CD8-positive, alpha-beta memory T cell (primary cell): ENCODE measurements at regions of chr10 and their contacts with region 1.

Region 1: GRCh38 chr10:6445501-6446316 is 134.4 kb downstream of the PRKCQ start:
- DNase-seq: peak; percentile 25 to 71 (median 45)
- H3K4me3 ChIP-seq: no peak overlapping the region
- H3K4me3 Mint-ChIP-seq: peak overlapping the region in 2 of 7 donors; percentile 13 to 82
- H3K27ac ChIP-seq: no peak overlapping the region
- H3K27ac Mint-ChIP-seq: peak overlapping the region; percentile 1 to 95 (median 48)
- H3K4me1 ChIP-seq: peaks cover 6% of the 10 kb centered on the region
- H3K4me1 Mint-ChIP-seq: peaks cover 16 to 43% (median 23%) of the 10 kb centered on the region in 3 donors
- H3K27me3 ChIP-seq: no peaks in the 10 kb centered on the region
- H3K27me3 Mint-ChIP-seq: no peaks in the 10 kb centered on the region

Region 2: DNA sequence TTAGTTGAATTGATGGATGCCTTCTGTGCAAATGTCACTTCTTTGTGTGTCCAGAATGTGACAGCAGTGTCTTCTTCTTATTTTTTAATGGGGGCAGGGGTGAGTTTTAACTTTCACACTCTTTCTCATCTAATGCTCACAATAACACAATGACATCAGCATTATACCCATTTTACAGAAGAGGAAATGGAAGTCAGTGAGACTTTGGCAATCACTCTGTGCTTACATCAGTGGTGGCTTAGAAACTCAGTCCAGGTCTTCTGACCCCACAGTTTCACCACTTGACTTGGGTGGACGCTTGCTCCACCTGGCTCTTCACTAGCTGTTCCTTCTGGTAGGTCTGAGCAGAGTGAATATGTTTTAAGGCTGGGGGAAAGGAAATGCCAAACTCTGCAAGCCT is 10.4 kb after region 1 on chr10:
- CTCF ChIA-PET with region 1: interaction called, 10 read pairs
- POLR2A ChIA-PET with region 1: no interaction called
- DNase-seq: no peak
- H3K4me3 ChIP-seq: no peak overlapping the region
- H3K4me3 Mint-ChIP-seq: peak overlapping the region in 1 of 7 donors; percentile 8
- H3K27ac ChIP-seq: no peak overlapping the region
- H3K27ac Mint-ChIP-seq: peak overlapping the region in 4 of 8 donors; percentile 3 to 77 (median 61)
- H3K4me1 ChIP-seq: no peaks in the 10 kb centered on the region
- H3K4me1 Mint-ChIP-seq: peaks cover 24 to 42% (median 40%) of the 10 kb centered on the region in 3 donors
- H3K27me3 ChIP-seq: no peaks in the 10 kb centered on the region
- H3K27me3 Mint-ChIP-seq: peaks cover 0 to 5% of the 10 kb centered on the region in 2 donors

Region 3: GRCh38 chr10:6593241-6593671 is 147.5 kb after region 1 on chr10:
- CTCF ChIA-PET with region 1: interaction called, 10 read pairs
- POLR2A ChIA-PET with region 1: no interaction called
- DNase-seq: peak in 1 of 5 donors; percentile 66
- H3K4me3 ChIP-seq: no peak overlapping the region
- H3K4me3 Mint-ChIP-seq: peak overlapping the region; percentile 8 to 67 (median 63)
- H3K27ac ChIP-seq: no peak overlapping the region
- H3K27ac Mint-ChIP-seq: peak overlapping the region; percentile 74 to 95 (median 92)
- H3K4me1 ChIP-seq: peaks cover 87% of the 10 kb centered on the region
- H3K4me1 Mint-ChIP-seq: peaks cover 72 to 92% (median 92%) of the 10 kb centered on the region in 3 donors
- H3K27me3 ChIP-seq: no peaks in the 10 kb centered on the region
- H3K27me3 Mint-ChIP-seq: peaks cover 0 to 2% of the 10 kb centered on the region in 2 donors

Region 4: DNA sequence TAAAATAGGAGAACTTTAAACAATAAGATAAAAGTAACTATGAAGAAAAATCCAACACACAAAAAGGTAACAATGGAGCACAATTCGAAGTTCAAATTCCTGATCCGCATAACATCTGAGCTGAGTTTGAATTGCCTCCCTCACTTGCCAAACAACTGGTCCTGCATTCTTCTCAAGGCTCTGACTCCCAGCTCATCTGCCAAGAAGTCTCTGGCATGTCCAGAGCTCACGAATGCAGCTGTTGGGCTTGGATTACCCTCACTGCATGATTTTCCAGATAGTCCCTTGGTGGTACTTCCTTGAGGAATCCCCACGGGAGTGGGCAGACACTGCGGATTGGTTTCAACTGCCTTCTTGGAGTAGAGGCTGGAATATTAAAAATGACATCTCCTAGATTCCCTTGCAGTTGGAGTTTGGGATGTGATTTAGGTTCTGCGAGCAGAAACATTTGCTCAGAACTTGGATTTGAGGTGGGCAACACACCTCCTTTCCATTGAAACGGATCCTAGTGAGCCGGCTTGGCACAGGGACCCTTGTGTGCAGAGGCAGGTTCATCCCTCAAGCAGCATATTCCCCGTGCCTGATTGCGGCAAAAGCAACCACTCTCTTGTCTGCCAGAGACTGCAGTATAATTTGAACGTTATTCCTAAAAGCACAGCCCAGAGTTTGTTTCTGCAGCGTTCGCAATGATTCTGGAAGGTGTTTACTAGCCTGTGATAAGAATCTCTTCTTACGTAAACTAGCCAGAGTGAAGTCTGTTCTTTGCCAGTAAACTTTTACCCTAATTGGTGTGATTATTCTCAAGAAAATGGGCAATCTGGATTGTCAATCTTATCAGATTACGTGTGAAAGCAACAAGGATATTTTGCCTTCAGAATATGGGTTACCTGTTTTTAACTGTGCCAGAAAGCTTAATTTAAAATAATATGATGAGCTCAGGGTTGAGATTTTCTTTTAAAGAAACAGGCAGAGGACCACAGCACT is 157.7 kb after region 1 on chr10:
- CTCF ChIA-PET with region 1: interaction called, 10 read pairs
- POLR2A ChIA-PET with region 1: interaction called, 10 read pairs
- DNase-seq: no peak
- H3K4me3 ChIP-seq: no peak overlapping the region
- H3K4me3 Mint-ChIP-seq: no peak overlapping the region
- H3K27ac ChIP-seq: no peak overlapping the region
- H3K27ac Mint-ChIP-seq: peak overlapping the region in 1 of 8 donors; percentile 15
- H3K4me1 ChIP-seq: peaks cover 43% of the 10 kb centered on the region
- H3K4me1 Mint-ChIP-seq: peaks cover 61 to 67% (median 67%) of the 10 kb centered on the region in 3 donors
- H3K27me3 ChIP-seq: no peaks in the 10 kb centered on the region
- H3K27me3 Mint-ChIP-seq: peaks cover 0 to 1% of the 10 kb centered on the region in 2 donors

Region 5: DNA sequence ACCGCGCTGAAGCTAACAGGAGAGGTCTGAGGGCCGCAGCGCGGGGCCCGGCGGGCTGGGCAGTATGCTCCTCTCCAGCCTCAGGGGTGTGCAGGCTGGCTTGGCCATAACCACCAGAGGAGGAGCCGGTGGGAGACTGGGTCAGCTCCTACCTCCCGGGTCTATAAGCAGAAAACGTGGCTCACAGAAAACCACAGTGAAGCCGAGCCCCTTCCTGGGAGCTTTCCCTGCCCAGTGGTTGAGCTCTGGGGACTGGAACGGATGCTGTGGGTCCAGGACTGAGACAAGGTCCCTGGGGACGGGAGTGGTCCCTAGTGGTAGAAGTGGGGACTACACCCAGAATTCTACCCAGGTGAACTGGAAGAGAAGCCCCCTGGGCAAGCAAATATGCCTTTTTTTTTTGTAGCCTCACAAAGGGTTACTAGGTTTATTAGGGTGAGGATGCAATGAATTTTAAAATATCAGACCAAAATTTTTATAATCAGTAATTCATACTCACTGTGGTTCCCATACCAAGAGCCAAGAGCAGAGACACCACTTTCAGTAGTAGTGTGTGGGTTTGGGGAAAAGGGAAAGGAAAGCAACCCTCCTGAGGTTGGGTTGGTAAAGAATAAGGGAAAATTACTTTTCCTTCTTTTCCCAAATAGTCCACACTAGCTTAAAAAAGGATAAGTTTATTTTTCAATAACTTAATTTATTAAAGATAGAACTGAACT is 202.3 kb after region 1 on chr10:
- CTCF ChIA-PET with region 1: interaction called, 11 read pairs
- POLR2A ChIA-PET with region 1: interaction called, 3 read pairs
- DNase-seq: peak; percentile 50 to 76 (median 65)
- H3K4me3 ChIP-seq: no peak overlapping the region
- H3K4me3 Mint-ChIP-seq: no peak overlapping the region
- H3K27ac ChIP-seq: no peak overlapping the region
- H3K27ac Mint-ChIP-seq: peak overlapping the region in 1 of 8 donors; percentile 19
- H3K4me1 ChIP-seq: peaks cover 15% of the 10 kb centered on the region
- H3K4me1 Mint-ChIP-seq: peaks cover 21 to 32% (median 29%) of the 10 kb centered on the region in 3 donors
- H3K27me3 ChIP-seq: no peaks in the 10 kb centered on the region
- H3K27me3 Mint-ChIP-seq: peaks cover 0 to under 1% of the 10 kb centered on the region in 2 donors